ENCODE measurements at regions of chr3 and their contacts with region 1.

Region 1: DNA sequence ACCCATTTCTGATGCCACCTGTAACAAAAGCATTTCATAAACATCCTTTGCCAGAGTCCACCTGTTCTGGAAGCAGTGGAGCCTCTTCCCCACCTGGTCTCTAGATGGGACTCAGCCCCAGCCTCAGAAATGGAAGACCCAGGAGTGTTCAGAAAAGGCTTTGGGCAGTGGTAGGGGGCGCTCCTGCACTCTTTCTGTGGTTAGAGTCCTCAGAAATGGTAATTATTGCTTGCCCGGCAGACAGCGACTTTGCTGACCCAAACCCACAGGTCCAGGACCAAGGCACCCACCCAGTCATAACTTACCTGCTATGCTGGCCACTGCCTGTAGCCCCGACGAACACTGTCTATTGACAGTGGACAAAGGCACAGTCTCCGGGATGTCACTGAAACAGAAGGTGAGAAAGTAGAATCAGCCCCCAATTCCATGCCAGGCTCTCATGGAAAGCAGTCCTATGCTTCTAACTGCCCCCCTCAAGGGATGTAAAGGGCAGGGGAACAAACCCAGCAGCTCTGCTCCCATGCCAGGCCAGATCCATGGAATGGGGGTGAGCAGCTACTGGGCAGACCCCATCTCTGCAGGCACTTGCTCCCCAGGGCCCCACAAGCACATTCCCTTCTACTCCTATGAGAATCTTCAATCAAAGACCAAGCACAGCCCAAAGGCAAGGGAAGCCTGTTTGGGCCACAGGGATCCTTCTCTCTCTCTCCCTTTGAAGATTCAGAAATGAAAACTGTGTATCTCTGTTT is 5.1 kb downstream of the ACAA1 start:
- DNase-seq: peak; percentile 51
- H3K4me3 ChIP-seq: no peak overlapping the region
- H3K27ac ChIP-seq: no peak overlapping the region
- H3K4me1 ChIP-seq: peaks cover 4% of the 10 kb centered on the region
- H3K27me3 ChIP-seq: no peaks in the 10 kb centered on the region
- CTCF ChIP-seq: peak; percentile 57 to 73
- POLR2A ChIP-seq: no peak

Region 2: GRCh38 chr3:38247366-38248035 is 115.7 kb after region 1 on chr3:
- CTCF ChIA-PET with region 1: interaction called, 14 read pairs
- POLR2A ChIA-PET with region 1: no interaction called
- dilution Hi-C with region 1: no loop called
- intact Hi-C with region 1: loop called (anchors 2 kb)
- DNase-seq: peak; percentile 74
- H3K4me3 ChIP-seq: no peak overlapping the region
- H3K27ac ChIP-seq: no peak overlapping the region
- H3K4me1 ChIP-seq: no peaks in the 10 kb centered on the region
- H3K27me3 ChIP-seq: no peaks in the 10 kb centered on the region
- CTCF ChIP-seq: peak in 1 of 2 donors; percentile 13
- POLR2A ChIP-seq: no peak

Measured in endothelial cell of umbilical vein (primary cell).